Left lung (tissue), 14 donors: ENCODE measurements at regions of chr1 and their contacts with region 1.

Region 1: DNA sequence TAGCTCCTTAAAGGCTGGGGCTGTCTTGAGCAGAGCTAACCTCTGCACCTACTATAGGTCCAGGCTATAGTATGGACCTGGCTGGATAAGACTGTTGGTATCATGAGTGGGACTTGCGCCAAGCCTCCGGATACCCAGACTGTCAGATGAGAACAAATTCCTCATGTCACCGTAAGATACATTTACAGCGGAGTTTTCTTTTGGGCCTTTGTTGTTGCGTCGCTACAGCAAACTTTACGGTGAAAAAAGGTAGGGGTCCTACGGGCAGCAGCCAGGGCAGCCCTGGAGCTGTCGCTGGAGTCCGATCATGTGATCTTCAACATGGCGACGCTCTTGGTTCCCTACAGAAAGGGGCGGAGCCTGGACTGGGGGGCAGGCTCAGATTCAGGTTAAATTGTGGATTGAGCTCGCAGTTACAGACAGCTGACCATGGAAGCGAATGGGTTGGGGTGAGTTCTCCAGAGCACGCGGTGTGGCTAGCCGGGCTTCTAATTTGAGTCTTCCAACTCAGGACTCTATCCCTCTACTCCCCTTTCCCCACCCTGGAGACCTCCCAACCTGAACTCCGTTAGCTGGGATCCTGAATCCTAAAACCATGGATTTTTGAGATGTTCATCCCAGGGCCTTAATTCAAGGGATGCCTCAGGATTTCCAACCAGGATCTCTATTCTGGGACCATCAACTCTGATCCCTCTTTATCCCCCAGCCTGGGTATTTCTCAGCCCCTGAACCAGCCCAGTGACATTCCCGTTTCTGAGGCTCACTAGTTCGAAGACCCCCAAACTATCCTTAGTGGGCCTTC is at the start of gene UROD:
- DNase-seq: peak; percentile 92 to 97 (median 93)
- ATAC-seq: peak; percentile 92
- H3K4me3 ChIP-seq: peak within 1 kb of the TSS; percentile 79 to 86
- H3K27ac ChIP-seq: peak within 1 kb of the TSS; percentile 87 to 88
- H3K4me1 ChIP-seq: peaks cover 18 to 52% of the 10 kb centered on the region in 2 donors
- H3K27me3 ChIP-seq: no peaks in the 10 kb centered on the region
- CTCF ChIP-seq: no peak
- polyA plus RNA-seq, gene UROD: 86.7 to 102 (median 91.0) TPM

Region 2: DNA sequence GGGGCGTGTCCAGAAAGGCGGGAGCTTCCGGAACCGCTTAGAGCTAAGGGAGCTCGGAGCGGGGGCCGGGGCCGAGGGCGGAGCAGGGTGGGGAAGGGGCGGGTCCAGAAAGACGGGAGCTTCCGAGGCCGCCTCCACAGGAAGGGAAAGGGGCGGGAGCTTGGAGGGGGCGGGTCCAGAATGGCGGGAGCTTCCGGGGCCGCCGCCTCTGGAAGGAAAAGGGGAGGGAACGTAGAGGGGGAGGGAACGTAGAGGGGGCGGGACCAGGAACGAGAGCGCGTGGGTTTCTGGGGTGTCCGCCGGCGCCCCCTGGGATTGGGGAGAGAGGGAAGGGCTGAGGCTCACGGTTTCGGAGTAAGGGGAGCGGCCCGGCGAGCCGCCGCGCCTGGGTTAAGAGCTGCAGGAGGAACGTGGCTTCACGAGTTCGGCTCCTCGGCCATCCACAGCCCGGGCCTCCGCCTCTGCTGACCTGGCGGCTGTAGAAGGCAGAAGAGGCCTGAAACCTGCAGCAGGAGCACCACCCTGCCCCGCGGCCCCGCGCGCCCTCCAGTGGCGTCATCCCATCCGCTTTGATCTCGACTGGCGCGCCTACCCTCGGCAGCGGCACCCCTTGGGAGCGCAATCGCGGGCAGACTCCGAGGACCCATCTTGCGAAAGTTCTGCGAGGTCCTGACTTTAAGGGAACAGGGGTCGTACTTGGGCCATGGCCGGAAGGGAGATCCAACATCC is 291.7 kb after region 1 on chr1:
- intact Hi-C with region 1: loop called in 1 of 2 experiments (anchors 5 kb)
- DNase-seq: peak; percentile 96 to 100 (median 99)
- ATAC-seq: peak; percentile 96
- H3K4me3 ChIP-seq: peak overlapping the region; percentile 60 to 77
- H3K27ac ChIP-seq: peak overlapping the region; percentile 89 to 94
- H3K4me1 ChIP-seq: peaks cover 15 to 18% of the 10 kb centered on the region in 2 donors
- H3K27me3 ChIP-seq: no peaks in the 10 kb centered on the region
- CTCF ChIP-seq: peak; percentile 53 to 55